ENCODE measurements at regions of chr14 and their contacts with region 1.

Region 1: DNA sequence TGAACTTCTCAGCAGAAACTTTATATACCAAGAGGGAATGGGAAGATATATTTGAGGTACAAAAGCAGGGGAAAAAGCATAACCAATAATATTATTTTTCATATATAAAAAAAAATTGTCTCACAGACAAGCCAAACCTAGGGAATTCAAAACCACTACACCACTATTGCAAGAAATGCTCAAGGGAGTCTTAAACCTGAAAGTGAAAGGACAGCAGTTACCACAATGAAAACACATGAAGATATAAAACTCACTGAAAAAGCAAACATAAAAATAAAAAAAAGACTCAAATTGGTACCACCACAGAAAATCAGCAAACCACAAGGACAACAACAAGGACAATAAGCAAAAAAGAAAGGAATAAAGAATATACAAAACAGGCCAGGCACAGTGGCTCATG is 131.9 kb downstream of the CEP128 start:
- DNase-seq: no peak
- H3K4me3 ChIP-seq: no peak overlapping the region
- H3K27ac ChIP-seq: no peak overlapping the region
- H3K4me1 ChIP-seq: no peaks in the 10 kb centered on the region
- H3K27me3 ChIP-seq: no peaks in the 10 kb centered on the region
- CTCF ChIP-seq: no peak
- POLR2A ChIP-seq: no peak

Region 2: DNA sequence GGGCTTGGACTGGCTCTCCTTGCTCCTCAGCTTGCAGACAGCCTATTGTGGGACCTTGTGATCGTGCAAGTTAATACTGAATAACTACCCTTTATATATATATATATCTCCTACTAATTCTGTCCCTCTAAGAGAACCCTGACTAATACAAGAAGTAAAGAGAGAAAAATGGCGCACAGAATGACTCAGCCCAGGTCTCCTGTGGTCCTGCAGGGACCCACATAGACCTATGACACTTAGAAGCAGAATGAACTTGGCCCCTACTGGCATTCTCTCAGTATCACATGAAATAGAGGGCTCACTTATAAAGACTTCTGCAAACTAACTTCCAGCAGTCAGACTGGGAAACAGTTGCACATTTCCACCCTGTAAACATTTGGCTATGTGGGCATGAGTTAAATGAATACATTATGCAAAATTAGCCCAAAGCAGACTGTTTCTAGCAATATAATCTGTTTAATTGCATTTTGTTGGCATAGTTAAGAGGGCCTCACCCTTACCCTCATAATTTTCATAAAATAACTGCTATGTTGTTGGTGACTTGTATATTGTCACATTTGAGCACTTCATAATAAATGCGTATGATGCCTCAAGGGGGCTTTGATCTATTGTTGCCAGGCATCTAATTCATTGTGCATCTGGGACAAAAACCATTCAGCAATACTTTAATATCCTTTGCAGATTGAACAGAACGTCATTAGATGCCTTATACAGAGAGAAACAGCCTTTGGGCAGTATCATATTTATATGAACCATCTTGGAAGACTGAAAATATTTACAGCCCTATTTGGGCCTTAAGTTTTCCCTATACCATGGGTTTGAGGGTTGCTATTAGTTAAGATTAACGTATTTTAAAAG is 248.6 kb before region 1 on chr14:
- intact Hi-C with region 1: no loop called
- DNase-seq: no peak
- H3K4me3 ChIP-seq: no peak overlapping the region
- H3K27ac ChIP-seq: no peak overlapping the region
- H3K4me1 ChIP-seq: no peaks in the 10 kb centered on the region
- H3K27me3 ChIP-seq: no peaks in the 10 kb centered on the region
- CTCF ChIP-seq: no peak
- POLR2A ChIP-seq: no peak

Region 3: GRCh38 chr14:80636071-80636470 is 173.6 kb before region 1 on chr14:
- intact Hi-C with region 1: no loop called
- DNase-seq: no peak
- H3K4me3 ChIP-seq: no peak overlapping the region
- H3K27ac ChIP-seq: no peak overlapping the region
- H3K4me1 ChIP-seq: no peaks in the 10 kb centered on the region
- H3K27me3 ChIP-seq: no peaks in the 10 kb centered on the region
- CTCF ChIP-seq: no peak
- POLR2A ChIP-seq: no peak

Region 4: GRCh38 chr14:80751285-80751684 is 58.4 kb before region 1 on chr14:
- intact Hi-C with region 1: loop called (anchors 2 kb)
- DNase-seq: no peak
- H3K4me3 ChIP-seq: no peak overlapping the region
- H3K27ac ChIP-seq: no peak overlapping the region
- H3K4me1 ChIP-seq: no peaks in the 10 kb centered on the region
- H3K27me3 ChIP-seq: no peaks in the 10 kb centered on the region
- CTCF ChIP-seq: no peak
- POLR2A ChIP-seq: no peak

Measured in breast epithelium (tissue), 4 donors.